ENCODE measurements at regions of chr19 and their contacts with region 1.

Region 1: DNA sequence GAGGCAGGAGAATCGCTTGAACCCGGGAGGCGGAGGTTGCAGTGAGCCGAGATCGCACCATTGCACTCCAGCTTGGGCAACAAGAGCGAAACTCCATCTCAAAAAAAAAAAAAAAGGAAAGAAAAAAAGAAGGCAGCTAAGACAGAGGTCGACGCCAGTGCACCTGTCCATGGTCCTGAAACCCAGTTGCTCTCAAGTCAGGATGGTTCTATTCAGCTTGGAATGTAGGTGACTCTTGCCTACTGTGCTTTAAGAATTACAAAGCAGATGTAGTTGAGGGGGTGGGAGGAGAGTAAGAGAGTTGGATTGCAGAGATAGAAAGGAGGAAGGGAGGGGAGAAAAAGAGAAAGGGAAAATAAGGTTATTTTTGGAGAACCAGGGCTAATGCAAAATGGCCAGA is 18.7 kb downstream of the CACNG7 start:
- DNase-seq: peak in 3 of 5 donors; percentile 22 to 28 (median 26)
- H3K4me3 ChIP-seq: no peak overlapping the region
- H3K4me3 Mint-ChIP-seq: peak overlapping the region in 1 of 8 donors; percentile 58
- H3K27ac ChIP-seq: no peak overlapping the region
- H3K27ac Mint-ChIP-seq: peak overlapping the region in 1 of 7 donors; percentile 78
- H3K4me1 ChIP-seq: no peaks in the 10 kb centered on the region
- H3K4me1 Mint-ChIP-seq: no peaks in the 10 kb centered on the region
- H3K27me3 ChIP-seq: no peaks in the 10 kb centered on the region
- H3K27me3 Mint-ChIP-seq: peaks cover 6 to 9% of the 10 kb centered on the region in 2 donors

Region 2: GRCh38 chr19:53906211-53907192 is 21.2 kb before region 1 on chr19:
- CTCF ChIA-PET with region 1: no interaction called
- POLR2A ChIA-PET with region 1: no interaction called
- intact Hi-C with region 1: loop called (anchors 1 kb)
- DNase-seq: peak; percentile 50 to 66 (median 56)
- H3K4me3 ChIP-seq: no peak overlapping the region
- H3K4me3 Mint-ChIP-seq: peak overlapping the region in 6 of 8 donors; percentile 27 to 41 (median 34)
- H3K27ac ChIP-seq: no peak overlapping the region
- H3K27ac Mint-ChIP-seq: peak overlapping the region in 1 of 7 donors; percentile 83
- H3K4me1 ChIP-seq: peaks cover 16% of the 10 kb centered on the region
- H3K4me1 Mint-ChIP-seq: peaks cover 19 to 44% (median 25%) of the 10 kb centered on the region in 4 donors
- H3K27me3 ChIP-seq: peaks cover 35% of the 10 kb centered on the region
- H3K27me3 Mint-ChIP-seq: peaks cover 46 to 60% of the 10 kb centered on the region in 2 donors

Measured in CD4-positive, alpha-beta memory T cell (primary cell).